Caco-2 (cell line): ENCODE measurements at regions of chr7 and their contacts with region 1.

Region 1: DNA sequence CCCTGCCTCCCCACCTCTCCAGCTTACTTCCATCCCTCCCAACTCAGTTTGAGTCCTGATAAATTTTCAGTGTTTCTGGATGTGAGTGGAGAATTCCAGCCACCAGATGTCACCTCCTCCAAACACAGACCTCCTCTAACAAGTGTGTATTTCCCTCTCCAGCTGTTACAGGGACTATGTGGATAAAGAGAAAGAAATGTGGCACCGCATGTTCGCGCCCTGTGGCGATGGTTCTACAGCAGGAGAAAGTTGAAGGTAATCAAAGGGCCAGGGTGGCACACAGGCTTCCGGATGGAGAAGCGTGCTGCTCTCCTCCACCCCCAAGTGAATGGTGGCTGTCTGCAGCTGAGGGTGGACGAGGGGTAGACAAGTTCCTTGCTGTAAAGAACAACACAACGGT is 14.7 kb downstream of the FKBP6 start:
- DNase-seq: peak; percentile 54 to 55
- H3K4me3 ChIP-seq: peak overlapping the region; percentile 30
- H3K4me3 Mint-ChIP-seq: peak overlapping the region; percentile 62
- H3K27ac Mint-ChIP-seq: peak overlapping the region; percentile 5
- H3K4me1 ChIP-seq: peaks cover 22% of the 10 kb centered on the region
- H3K4me1 Mint-ChIP-seq: peaks cover 24% of the 10 kb centered on the region
- H3K27me3 ChIP-seq: no peaks in the 10 kb centered on the region
- H3K27me3 Mint-ChIP-seq: no peaks in the 10 kb centered on the region
- CTCF ChIP-seq: peak; percentile 53 to 77

Region 2: GRCh38 chr7:73358590-73359275 is 16.1 kb after region 1 on chr7:
- CTCF ChIA-PET with region 1: no interaction called
- POLR2A ChIA-PET with region 1: no interaction called
- intact Hi-C with region 1: loop called (anchors 2 kb)
- DNase-seq: no peak
- H3K4me3 ChIP-seq: no peak overlapping the region
- H3K4me3 Mint-ChIP-seq: no peak overlapping the region
- H3K27ac Mint-ChIP-seq: peak overlapping the region; percentile 47
- H3K4me1 ChIP-seq: 0 out of 2 replicates have a peak, but pooled peaks cover 7% of the 10 kb centered on the region
- H3K4me1 Mint-ChIP-seq: no peaks in the 10 kb centered on the region
- H3K27me3 ChIP-seq: no peaks in the 10 kb centered on the region
- H3K27me3 Mint-ChIP-seq: no peaks in the 10 kb centered on the region
- CTCF ChIP-seq: no peak

Region 3: DNA sequence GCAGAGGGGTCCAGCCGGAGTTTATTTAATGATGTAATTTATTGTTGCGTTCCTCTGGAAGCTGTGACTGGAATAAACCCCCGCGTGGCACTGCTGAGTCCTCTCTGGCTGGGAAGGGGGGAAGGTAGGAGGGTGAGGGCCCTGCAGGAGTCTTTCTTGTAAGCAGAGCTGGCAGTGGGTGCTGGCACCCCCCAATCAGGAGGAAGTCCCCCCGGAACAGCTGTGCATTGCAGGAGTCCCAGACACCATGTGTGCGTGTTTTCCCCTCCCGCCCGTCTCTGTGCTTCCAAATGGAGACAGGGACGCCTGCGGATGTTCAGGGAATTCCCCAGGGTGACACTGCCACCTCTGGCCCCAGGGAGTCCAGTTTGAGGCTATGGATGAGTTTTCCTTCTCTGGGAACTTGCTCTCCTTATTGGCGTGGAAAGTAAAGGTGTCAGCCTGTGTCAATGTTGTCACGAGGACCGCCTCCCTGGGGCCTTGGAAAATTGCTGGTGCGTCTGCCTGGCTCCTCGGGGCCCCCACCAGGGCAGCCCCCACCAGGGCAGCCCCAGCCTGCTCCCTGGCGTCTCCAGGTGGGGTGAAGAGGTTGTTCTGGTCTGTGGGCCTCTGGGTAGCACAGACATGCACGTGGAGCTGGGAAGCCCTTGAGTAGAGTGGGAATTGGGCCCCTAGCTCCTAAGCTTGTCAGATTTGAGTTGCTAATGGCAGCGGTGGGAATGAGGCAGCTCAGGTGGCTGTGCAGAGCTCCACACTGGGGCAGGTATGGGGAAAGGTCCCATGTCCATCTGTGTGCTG is 93.6 kb after region 1 on chr7:
- CTCF ChIA-PET with region 1: interaction called, 7 read pairs
- POLR2A ChIA-PET with region 1: no interaction called
- intact Hi-C with region 1: loop called (anchors 1 kb)
- DNase-seq: peak; percentile 66 to 67
- H3K4me3 ChIP-seq: no peak overlapping the region
- H3K4me3 Mint-ChIP-seq: peak overlapping the region; percentile 37
- H3K27ac Mint-ChIP-seq: peak overlapping the region; percentile 57
- H3K4me1 ChIP-seq: peaks cover 9% of the 10 kb centered on the region; the same call in 1 of the 2 replicates
- H3K4me1 Mint-ChIP-seq: no peaks in the 10 kb centered on the region
- H3K27me3 ChIP-seq: no peaks in the 10 kb centered on the region
- H3K27me3 Mint-ChIP-seq: peaks cover 2% of the 10 kb centered on the region
- CTCF ChIP-seq: peak; percentile 15 to 45

Region 4: DNA sequence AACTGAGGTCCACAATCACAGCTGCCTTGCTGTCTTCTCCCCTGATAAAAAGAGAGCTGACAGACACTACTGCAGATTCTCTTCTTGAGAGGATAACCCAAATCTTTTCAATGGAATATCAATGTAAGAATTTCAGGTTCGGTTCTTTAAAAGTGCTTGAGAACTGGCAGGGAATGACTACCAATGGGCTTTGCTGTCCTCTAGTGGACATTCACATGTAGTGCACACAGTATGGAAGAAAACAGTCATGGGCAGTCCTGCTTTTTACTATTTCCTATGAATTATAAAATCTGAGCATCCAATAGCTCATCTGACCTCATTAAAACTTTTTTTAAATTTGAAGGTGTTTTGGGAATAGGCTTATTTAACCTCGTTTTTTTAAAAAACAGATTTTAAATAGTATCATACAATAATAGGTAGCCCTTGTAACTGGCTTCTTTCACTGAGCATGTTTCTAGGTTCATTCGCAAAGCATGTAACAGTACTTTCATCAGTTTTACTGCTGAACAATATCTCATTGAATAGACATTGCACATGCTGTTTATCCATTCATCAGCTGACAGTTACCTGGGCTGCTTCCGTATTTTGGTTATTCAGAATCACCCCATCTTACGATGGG is 109.2 kb after region 1 on chr7:
- CTCF ChIA-PET with region 1: no interaction called
- POLR2A ChIA-PET with region 1: no interaction called
- intact Hi-C with region 1: loop called (anchors 2 kb)
- DNase-seq: peak in 1 of 2 experiments; percentile 59
- H3K4me3 ChIP-seq: no peak overlapping the region
- H3K4me3 Mint-ChIP-seq: no peak overlapping the region
- H3K27ac Mint-ChIP-seq: no peak overlapping the region
- H3K4me1 ChIP-seq: no peaks in the 10 kb centered on the region
- H3K4me1 Mint-ChIP-seq: peaks cover 7% of the 10 kb centered on the region
- H3K27me3 ChIP-seq: no peaks in the 10 kb centered on the region
- H3K27me3 Mint-ChIP-seq: no peaks in the 10 kb centered on the region
- CTCF ChIP-seq: peak; percentile 93 to 96

Region 5: DNA sequence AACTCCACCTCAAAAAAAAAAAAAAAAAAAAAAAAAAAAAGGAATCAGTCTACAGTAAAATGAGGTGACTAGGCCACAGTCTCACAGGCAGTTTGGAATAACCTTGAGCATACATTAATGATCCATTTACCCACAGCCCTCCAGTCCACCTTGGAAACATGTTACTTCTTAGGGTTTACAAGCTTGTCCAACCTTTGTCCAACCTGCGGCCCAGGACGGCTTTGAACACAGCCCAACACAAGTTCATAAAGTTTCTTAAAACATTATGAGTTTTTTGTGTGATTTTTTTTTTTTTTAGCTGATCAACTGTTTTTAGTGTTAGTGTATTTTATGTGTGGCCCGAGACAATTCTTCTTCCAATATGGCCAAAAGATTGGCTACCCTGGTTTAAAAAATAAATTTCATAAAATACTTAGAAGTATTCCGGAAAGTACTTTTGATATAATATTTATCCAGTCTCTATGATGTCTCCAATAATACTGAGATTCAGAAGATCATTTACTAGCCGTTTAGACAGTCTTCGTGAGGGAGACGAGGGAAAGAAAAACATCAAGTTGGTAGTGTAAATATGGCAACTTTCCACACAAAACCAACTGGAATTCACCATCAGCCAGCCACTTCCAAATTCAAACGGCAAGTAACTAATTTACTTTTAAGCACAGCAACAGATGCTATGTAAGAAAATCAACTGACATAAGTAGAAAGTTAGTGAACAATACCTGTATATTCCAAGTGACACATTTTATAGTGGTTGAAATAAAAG is 169.6 kb after region 1 on chr7:
- CTCF ChIA-PET with region 1: no interaction called
- POLR2A ChIA-PET with region 1: no interaction called
- intact Hi-C with region 1: no loop called
- DNase-seq: no peak
- H3K4me3 ChIP-seq: no peak overlapping the region
- H3K4me3 Mint-ChIP-seq: no peak overlapping the region
- H3K27ac Mint-ChIP-seq: no peak overlapping the region
- H3K4me1 ChIP-seq: no peaks in the 10 kb centered on the region
- H3K4me1 Mint-ChIP-seq: no peaks in the 10 kb centered on the region
- H3K27me3 ChIP-seq: no peaks in the 10 kb centered on the region
- H3K27me3 Mint-ChIP-seq: no peaks in the 10 kb centered on the region
- CTCF ChIP-seq: no peak